AG04449 (cell line): ENCODE measurements at regions of chr20 and their contacts with region 1.

Region 1: DNA sequence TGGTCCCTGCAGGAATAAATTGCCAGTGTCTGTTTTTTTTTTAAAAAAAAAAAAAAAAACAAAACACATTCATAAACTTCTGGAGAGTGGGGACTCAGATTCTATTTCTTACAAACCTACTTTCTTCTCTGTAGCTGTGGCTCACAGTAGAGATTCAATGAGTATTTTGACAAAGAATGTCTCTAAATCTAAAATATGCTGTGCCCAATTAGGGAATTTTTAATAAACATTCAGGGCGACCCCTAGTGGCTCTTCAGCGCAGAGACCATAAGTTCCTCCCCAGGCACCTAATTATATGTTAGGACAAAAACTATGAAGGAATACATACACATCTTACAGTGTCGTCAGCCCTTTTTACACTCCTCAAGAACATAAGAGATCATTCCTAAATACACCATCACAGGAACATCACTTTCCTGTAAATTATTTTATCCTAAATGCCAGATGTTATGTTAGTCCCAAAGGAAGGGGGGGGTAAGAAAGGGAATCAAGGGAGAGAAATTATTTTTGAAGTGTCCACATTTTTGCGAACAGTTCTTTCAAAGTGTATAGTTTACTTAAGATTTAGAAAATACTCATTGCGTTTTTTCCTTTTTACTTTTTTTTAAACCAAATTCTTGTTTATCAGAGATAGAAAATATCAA is 21.8 kb upstream of the NAA20 start:
- DNase-seq: no peak
- H3K4me3 ChIP-seq: no peak overlapping the region
- CTCF ChIP-seq: peak; percentile 53

Region 2: DNA sequence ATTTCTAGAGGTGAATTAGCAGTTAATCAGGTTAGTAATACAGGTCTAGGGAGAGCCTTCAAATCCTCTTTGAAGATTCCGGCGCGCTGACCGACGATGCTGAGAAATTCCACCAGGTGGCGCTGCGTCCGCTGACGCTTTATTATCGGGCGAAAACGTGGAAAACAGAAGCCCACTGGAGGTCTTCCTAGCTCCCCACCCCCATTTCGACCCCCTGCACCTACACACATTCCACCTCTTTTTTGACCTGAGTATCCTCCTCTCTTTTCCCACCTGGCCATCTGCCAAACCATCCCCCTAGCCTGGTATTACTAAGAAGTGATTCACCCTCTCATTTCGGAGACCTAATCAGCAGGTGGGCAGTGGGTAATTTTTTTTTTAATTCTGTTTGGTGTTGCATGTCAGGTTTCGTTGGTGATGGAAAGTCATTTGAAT is 302.6 kb before region 1 on chr20:
- CTCF ChIA-PET with region 1: interaction called, 18 read pairs
- POLR2A ChIA-PET with region 1: no interaction called
- DNase-seq: no peak
- H3K4me3 ChIP-seq: no peak overlapping the region
- CTCF ChIP-seq: peak; percentile 80

Region 3: GRCh38 chr20:19757487-19758132 is 237.7 kb before region 1 on chr20:
- CTCF ChIA-PET with region 1: interaction called, 11 read pairs
- POLR2A ChIA-PET with region 1: no interaction called
- DNase-seq: no peak
- H3K4me3 ChIP-seq: peak overlapping the region; percentile 85
- CTCF ChIP-seq: no peak

Region 4: DNA sequence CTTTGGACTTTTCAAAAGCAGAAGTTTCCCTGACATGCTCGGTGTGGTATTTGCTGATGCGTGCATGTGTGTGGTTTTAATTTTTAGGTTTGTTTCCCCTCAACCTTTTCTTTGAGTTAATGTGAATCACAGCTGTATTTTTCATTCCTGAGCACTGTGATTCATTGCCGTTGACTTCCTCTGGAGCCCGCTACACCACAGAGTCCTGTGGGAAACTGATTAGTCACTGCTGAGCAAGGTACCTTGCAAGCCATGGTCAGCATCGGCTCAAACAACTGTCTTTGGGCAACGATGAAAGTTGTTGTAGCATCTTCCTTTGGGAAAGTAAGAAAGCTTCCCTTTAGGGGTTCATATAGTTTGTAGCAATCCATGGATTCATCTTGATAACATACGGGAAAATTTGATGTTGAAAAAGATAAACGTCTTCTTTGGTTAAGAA is 179.8 kb before region 1 on chr20:
- CTCF ChIA-PET with region 1: interaction called, 12 read pairs
- POLR2A ChIA-PET with region 1: no interaction called
- DNase-seq: peak; percentile 96
- H3K4me3 ChIP-seq: no peak overlapping the region
- CTCF ChIP-seq: no peak

Region 5: DNA sequence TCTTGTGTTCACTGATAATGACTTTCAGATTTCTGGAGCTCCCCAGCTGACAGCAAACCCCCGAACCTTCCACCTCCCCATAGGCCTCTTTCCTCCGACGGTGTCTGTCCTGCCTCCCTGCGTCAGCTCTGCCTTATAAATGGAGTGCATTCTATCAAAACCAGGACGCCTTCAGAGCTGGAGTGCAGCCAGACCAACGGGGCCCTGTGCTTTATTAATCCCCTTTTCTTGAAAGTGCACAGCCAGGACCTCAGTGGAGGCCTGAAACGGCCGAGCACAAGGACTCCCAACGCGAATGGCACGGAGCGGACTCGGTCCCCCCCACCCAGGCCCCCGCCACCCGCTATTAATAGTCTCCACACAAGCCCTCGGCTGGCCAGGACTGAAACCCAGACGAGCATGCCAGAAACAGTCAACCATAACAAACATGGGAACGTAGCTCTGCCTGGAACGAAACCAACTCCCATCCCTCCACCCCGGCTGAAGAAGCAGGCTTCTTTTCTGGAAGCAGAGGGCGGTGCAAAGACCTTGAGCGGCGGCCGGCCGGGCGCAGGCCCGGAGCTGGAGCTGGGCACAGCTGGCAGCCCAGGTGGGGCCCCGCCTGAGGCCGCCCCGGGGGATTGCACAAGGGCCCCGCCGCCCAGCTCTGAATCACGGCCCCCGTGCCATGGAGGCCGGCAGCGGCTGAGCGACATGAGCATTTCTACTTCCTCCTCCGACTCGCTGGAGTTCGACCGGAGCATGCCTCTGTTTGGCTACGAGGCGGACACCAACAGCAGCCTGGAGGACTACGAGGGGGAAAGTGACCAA is 20.5 kb before region 1 on chr20:
- CTCF ChIA-PET with region 1: interaction called, 54 read pairs
- POLR2A ChIA-PET with region 1: interaction called, 67 read pairs
- DNase-seq: peak; percentile 96
- H3K4me3 ChIP-seq: peak overlapping the region; percentile 90
- CTCF ChIP-seq: no peak

Region 6: DNA sequence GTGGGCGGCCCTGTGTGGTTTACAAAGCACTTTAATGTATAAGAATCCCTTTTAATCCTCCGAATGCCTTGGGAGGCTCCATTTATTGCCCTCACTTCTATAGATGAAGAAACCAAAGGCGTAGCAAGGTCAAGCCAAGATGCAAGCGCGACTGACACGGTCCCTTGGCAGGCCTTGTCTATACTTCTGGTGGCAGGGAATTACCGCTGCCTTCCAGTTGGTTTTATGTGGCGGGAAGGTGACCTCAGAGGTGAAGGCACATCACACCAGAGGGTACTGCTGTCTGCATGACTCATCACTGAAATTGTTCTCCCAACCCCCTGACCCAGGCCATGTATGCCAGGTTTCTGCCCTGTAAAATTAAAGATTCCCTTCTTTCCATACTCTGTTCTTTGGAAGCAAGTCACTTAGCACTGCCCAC is 14.3 kb before region 1 on chr20:
- CTCF ChIA-PET with region 1: interaction called, 54 read pairs
- POLR2A ChIA-PET with region 1: interaction called, 67 read pairs
- DNase-seq: no peak
- H3K4me3 ChIP-seq: no peak overlapping the region
- CTCF ChIP-seq: no peak

Region 7: DNA sequence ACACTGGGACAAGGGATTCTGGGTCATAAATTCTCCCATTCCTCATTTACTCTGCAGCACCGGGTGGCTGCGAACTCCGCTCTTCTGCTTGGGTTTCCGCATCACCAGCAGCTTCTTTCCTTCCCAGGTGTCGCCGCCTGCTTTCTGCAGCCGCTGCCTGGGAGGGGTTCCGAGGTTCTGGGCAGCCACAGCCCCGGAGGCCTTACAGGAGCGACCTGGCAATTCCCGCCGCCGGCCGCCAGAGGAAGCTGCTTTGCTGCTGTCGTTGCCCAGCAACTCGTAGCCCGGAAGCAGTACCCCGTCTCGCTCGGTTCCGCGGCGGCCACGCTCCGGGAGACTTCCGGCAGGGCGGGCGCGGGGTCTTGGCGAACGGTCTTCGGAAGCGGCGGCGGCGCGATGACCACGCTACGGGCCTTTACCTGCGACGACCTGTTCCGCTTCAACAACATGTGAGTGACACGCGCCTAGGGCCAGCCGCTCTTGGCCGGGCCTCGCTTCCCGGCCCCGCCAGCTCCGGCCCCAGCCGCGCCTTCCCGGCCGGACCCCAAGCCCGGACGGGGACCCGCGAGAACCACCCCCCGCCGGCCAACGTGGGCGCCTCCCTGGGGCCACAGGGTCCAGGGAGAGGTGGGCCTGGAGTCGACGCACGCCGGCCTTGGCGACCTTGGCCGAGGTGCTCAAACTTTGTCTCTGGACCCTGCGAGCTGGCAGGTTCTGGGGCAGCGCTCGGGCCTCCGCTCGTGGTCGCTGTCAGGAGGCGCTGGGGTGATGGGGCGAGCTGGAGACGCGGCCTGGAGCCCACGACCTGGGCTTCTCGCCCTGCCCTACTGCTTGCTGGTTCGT is 21.9 kb after region 1 on chr20 and contains the start of gene NAA20:
- CTCF ChIA-PET with region 1: interaction called, 14 read pairs
- POLR2A ChIA-PET with region 1: no interaction called
- DNase-seq: no peak
- H3K4me3 ChIP-seq: peak within 1 kb of the TSS; percentile 88
- CTCF ChIP-seq: peak; percentile 89